ENCODE measurements at regions of chr4 and their contacts with region 1.

Region 1: GRCh38 chr4:87973283-87974169 is 2.0 kb upstream of the SPP1 start:
- DNase-seq: peak; percentile 70
- H3K4me3 Mint-ChIP-seq: peak overlapping the region; percentile 19
- H3K27ac Mint-ChIP-seq: no peak overlapping the region
- H3K4me1 Mint-ChIP-seq: peaks cover 11% of the 10 kb centered on the region
- H3K27me3 Mint-ChIP-seq: no peaks in the 10 kb centered on the region
- CTCF ChIP-seq: peak; percentile 84

Region 2: GRCh38 chr4:87543835-87544461 is 429.6 kb before region 1 on chr4:
- CTCF ChIA-PET with region 1: no interaction called
- POLR2A ChIA-PET with region 1: no interaction called
- intact Hi-C with region 1: loop called (anchors 5 kb)
- DNase-seq: peak; percentile 74
- H3K4me3 Mint-ChIP-seq: no peak overlapping the region
- H3K27ac Mint-ChIP-seq: no peak overlapping the region
- H3K4me1 Mint-ChIP-seq: no peaks in the 10 kb centered on the region
- H3K27me3 Mint-ChIP-seq: no peaks in the 10 kb centered on the region
- CTCF ChIP-seq: peak; percentile 53

Region 3: DNA sequence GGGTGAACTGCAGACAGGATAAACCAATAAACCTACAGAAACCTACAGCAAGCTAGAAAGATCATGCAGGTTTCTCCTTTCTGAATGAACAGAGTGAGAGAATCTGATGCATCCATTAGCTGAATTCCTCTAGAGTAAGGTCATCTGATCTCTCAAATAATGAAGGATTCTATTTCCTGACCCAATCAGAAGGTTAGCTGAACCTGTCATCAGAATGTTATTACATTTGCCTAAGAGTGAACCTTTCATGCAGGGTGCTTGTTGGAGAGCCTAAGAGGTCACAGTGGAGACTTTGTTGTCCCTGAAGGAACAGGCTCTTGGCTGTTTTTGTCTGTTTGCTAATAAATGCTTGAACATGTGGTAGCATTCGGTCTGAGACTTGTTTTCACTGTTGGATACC is 116.7 kb before region 1 on chr4:
- CTCF ChIA-PET with region 1: interaction called, 75 read pairs
- POLR2A ChIA-PET with region 1: interaction called, 13 read pairs
- intact Hi-C with region 1: loop called (anchors 1 kb)
- DNase-seq: no peak
- H3K4me3 Mint-ChIP-seq: no peak overlapping the region
- H3K27ac Mint-ChIP-seq: no peak overlapping the region
- H3K4me1 Mint-ChIP-seq: no peaks in the 10 kb centered on the region
- H3K27me3 Mint-ChIP-seq: peaks cover 10% of the 10 kb centered on the region
- CTCF ChIP-seq: no peak

Region 4: DNA sequence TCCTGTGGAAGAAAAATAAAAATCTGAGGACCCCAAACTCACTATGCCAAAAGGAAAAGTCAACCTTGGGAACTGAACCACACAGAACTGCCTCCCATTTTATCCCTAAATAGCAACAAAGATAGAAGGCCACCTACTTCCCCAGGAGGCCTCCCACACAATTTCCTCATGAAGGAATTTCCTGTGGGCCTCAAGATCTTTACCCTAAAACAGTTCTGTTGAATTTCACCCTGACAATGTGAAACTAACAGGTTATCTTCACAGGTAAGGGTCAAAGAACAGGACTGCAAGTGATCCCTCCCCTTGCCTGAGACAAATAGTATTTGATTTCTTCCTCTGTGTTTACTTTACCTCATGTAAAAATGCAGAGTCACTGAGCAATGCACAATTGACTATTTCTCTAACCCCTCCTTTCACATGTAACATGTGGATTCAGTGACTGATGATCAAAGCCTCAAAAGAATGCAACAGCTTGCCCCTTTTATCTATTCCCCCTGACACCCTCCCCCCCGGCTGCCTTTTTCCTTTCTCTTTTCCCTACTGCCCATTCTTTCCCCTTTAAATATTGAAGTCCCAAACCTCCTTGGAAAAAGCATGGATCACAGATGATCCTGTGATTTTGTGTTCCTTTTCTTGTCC is 107.4 kb before region 1 on chr4:
- CTCF ChIA-PET with region 1: interaction called, 12 read pairs
- POLR2A ChIA-PET with region 1: no interaction called
- intact Hi-C with region 1: no loop called
- DNase-seq: no peak
- H3K4me3 Mint-ChIP-seq: no peak overlapping the region
- H3K27ac Mint-ChIP-seq: no peak overlapping the region
- H3K4me1 Mint-ChIP-seq: peaks cover 7% of the 10 kb centered on the region
- H3K27me3 Mint-ChIP-seq: no peaks in the 10 kb centered on the region
- CTCF ChIP-seq: no peak

Region 5: DNA sequence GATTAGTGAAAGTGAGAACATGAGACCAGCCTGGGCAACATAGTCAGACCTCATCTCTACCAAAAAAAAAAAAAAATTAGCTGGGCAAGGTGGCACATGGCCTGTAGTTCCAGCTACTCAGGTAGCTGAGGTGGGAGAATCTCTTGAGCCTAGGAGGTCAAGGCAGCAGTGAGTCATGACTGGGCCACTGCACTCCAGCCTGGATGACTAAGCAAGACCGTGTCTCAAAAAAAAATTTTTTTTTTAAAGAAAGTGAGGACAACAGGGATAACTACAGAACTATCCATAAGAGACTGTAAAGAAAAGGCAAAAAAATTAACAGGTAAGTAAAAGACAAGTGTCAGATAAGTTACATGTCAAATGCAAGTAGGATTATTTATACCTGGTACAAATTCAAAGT is 11.5 kb before region 1 on chr4:
- CTCF ChIA-PET with region 1: interaction called, 19 read pairs
- POLR2A ChIA-PET with region 1: interaction called, 3 read pairs
- intact Hi-C with region 1: no loop called
- DNase-seq: peak; percentile 76
- H3K4me3 Mint-ChIP-seq: no peak overlapping the region
- H3K27ac Mint-ChIP-seq: peak overlapping the region; percentile 46
- H3K4me1 Mint-ChIP-seq: no peaks in the 10 kb centered on the region
- H3K27me3 Mint-ChIP-seq: no peaks in the 10 kb centered on the region
- CTCF ChIP-seq: no peak

Region 6: GRCh38 chr4:87985097-87985886 is 11.8 kb after region 1 on chr4:
- CTCF ChIA-PET with region 1: interaction called, 9 read pairs
- POLR2A ChIA-PET with region 1: interaction called, 11 read pairs
- intact Hi-C with region 1: no loop called
- DNase-seq: peak; percentile 74
- H3K4me3 Mint-ChIP-seq: no peak overlapping the region
- H3K27ac Mint-ChIP-seq: no peak overlapping the region
- H3K4me1 Mint-ChIP-seq: peaks cover 5% of the 10 kb centered on the region
- H3K27me3 Mint-ChIP-seq: no peaks in the 10 kb centered on the region
- CTCF ChIP-seq: peak; percentile 69